Gastrocnemius medialis (tissue), 4 donors: ENCODE measurements at regions of chr12 and their contacts with region 1.

Region 1: DNA sequence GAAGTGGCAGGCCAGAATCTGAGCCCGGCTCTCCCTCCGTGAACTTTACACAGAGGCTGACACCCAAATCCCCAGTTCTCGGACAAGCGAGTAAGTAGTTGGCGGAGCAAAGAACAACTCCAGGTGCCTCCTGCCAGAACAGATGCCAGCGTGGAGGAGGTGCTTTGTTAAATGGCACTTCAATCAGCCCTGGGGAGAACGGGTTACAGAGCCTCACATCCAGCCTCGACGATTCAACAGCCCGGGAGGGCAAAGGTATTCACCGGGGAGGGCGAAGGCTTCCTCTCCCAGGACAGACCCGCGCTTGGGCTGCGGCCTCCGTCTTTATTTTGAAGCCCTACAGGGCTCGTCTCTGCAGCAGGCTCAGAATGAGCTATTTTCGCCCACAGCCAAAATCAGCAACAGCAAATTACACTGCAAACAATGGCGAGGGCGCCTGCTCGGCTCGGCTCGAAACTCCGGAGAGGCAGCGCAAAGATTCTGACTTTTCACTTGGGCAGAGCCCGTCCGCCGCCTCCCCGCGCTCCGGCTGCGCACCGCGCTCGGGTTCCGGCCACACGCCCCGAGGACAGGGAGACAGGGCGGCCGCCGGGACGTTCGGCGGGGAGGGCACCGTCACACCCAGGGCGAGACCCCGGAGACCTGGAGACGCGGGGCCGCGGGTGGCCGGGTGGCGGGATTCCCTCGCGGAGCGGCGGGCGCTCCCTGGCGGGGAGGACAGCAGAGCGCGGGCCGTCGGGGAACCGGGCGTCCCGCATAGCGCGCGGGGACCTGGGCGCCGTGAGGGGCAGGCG is 811 bp downstream of the TMCC3 start:
- DNase-seq: peak; percentile 55 to 60
- ATAC-seq: peak; percentile 51 to 64
- H3K4me3 ChIP-seq: peak overlapping the region; percentile 72 to 97 (median 76)
- H3K27ac ChIP-seq: peak overlapping the region; percentile 87 to 98 (median 91)
- H3K4me1 ChIP-seq: peaks cover 43 to 57% of the 10 kb centered on the region in 2 donors
- H3K27me3 ChIP-seq: no peaks in the 10 kb centered on the region
- CTCF ChIP-seq: peak; percentile 47 to 59 (median 54)
- POLR2A ChIP-seq: peak in 1 of 2 donors; percentile 5

Region 2: DNA sequence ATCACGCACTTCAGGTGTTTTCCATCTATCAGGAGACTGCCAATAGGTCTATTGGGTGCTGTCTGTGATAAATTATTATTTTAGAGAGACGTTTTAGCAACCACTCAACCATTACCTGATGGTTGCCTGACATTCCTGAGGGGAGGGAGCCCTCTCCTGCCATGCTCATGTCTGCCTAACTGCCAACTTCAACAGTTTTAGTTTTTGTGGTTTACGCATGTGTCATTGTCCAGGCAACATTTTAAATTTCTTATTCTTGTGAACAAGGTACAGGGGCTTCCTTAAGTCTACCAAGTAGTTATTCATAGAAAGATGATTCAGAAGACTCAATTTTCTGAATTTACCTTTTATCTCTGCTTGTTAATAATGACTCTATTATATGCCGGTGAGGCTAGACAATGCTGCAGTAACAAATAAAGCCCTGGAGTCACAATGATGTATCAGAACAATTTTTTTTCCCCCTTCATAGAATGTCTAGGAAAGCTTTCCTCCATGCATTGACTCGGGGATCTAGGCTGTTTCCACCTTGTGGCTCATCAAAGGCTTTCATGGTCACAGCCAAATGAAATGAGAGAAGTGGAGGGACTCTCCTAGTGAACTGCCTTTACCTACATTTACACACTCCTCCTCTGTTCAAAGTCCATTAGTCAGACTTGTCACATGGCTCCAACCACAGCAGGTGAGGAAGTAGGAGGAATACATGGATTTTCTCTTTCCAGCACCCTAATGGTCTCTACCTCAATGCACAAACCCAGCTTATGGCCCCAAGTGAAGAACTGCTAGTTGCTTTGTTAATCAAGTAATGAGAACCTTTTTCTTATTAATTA is 746.6 kb before region 1 on chr12:
- in situ Hi-C with region 1: no loop called
- intact Hi-C with region 1: no loop called
- DNase-seq: no peak
- ATAC-seq: no peak
- H3K4me3 ChIP-seq: no peak overlapping the region
- H3K27ac ChIP-seq: no peak overlapping the region
- H3K4me1 ChIP-seq: no peaks in the 10 kb centered on the region
- H3K27me3 ChIP-seq: no peaks in the 10 kb centered on the region
- CTCF ChIP-seq: no peak
- POLR2A ChIP-seq: no peak

Region 3: DNA sequence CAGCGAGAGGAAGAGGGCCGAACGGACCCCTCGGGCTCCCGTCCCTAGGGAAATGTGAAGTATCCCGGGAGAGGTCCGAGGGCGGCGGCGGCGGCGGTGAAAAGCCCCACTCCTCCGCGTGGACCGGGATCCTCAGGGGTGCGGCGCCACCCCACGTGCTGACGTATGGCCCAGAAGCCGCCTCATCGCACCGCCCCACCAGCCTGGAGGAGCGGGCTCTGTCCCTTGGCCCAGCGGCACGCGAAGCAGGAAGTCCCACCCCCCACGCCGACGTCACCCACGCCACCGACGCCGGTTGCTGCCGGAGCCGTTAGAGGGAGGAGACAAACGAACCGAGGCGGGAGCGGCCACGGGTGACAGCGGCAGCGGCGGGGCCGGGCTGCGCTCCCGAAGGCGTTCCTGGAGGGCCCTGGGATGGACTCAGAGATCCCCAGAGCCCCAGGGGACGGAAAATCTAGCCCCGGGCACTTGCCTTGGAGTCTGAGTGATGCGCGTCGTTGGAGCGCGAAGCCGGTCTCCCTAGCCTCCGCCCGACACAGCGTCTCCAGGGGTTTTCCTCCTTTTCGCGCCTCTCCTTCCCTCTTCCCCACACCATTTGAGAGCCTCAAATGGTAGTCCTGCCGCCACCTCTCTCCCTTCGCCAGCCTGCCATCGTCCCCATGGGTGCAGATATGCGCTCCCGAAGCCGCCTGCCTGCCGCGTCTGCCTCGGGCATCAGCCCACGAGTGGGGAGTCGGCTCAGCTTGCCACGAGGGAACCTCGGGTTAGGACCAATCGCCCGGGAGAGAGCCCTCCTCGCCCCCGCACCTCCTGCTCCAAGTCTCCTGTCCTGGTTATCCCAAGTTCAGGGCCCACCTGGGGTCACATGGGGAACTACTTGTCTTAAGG is 189.6 kb before region 1 on chr12 and contains the start of gene CEP83:
- in situ Hi-C with region 1: no loop called
- intact Hi-C with region 1: loop called (anchors 2 kb)
- DNase-seq: peak; percentile 93 to 95
- ATAC-seq: peak; percentile 93 to 94
- H3K4me3 ChIP-seq: peak within 1 kb of the TSS; percentile 80 to 94 (median 86)
- H3K27ac ChIP-seq: peak within 1 kb of the TSS; percentile 91 to 94 (median 93)
- H3K4me1 ChIP-seq: peaks cover 10 to 12% of the 10 kb centered on the region in 2 donors
- H3K27me3 ChIP-seq: no peaks in the 10 kb centered on the region
- CTCF ChIP-seq: no peak
- POLR2A ChIP-seq: peak; percentile 76 to 89
- total RNA-seq, gene CEP83: 3.5 to 19.5 (median 11.2) TPM

Region 4: GRCh38 chr12:94596596-94596995 is 53.0 kb before region 1 on chr12:
- in situ Hi-C with region 1: loop called in 1 of 4 experiments (anchors 5 kb)
- intact Hi-C with region 1: loop called (anchors 5 kb)
- DNase-seq: peak; percentile 38 to 88
- ATAC-seq: peak; percentile 72 to 94
- H3K4me3 ChIP-seq: no peak overlapping the region
- H3K27ac ChIP-seq: peak overlapping the region; percentile 35 to 78 (median 61)
- H3K4me1 ChIP-seq: peaks cover 65 to 69% of the 10 kb centered on the region in 2 donors
- H3K27me3 ChIP-seq: no peaks in the 10 kb centered on the region
- CTCF ChIP-seq: no peak
- POLR2A ChIP-seq: no peak

Region 5: GRCh38 chr12:94710933-94711332 is 61.4 kb after region 1 on chr12:
- in situ Hi-C with region 1: loop called in 1 of 4 experiments (anchors 5 kb)
- intact Hi-C with region 1: loop called (anchors 2 kb)
- DNase-seq: no peak
- ATAC-seq: no peak
- H3K4me3 ChIP-seq: no peak overlapping the region
- H3K27ac ChIP-seq: no peak overlapping the region
- H3K4me1 ChIP-seq: peaks cover 29 to 30% of the 10 kb centered on the region in 2 donors
- H3K27me3 ChIP-seq: no peaks in the 10 kb centered on the region
- CTCF ChIP-seq: peak in 2 of 5 experiments; percentile 27 to 38
- POLR2A ChIP-seq: no peak